ENCODE measurements at regions of chr11 and their contacts with region 1.

Region 1: GRCh38 chr11:111938687-111939160 is 1.6 kb downstream of the DIXDC1 start:
- DNase-seq: peak in 4 of 42 donors; percentile 21 to 48 (median 40)

Region 2: GRCh38 chr11:112074026-112074811 is 135.5 kb after region 1 on chr11 and contains the start of gene NKAPD1:
- intact Hi-C with region 1: loop called (anchors 10 kb)
- DNase-seq: peak; percentile 61 to 94 (median 83)

Region 3: GRCh38 chr11:112656772-112657428 is 718.2 kb after region 1 on chr11:
- intact Hi-C with region 1: no loop called
- DNase-seq: no peak